AG04449 (cell line): ENCODE measurements at regions of chr3 and their contacts with region 1.

Region 1: DNA sequence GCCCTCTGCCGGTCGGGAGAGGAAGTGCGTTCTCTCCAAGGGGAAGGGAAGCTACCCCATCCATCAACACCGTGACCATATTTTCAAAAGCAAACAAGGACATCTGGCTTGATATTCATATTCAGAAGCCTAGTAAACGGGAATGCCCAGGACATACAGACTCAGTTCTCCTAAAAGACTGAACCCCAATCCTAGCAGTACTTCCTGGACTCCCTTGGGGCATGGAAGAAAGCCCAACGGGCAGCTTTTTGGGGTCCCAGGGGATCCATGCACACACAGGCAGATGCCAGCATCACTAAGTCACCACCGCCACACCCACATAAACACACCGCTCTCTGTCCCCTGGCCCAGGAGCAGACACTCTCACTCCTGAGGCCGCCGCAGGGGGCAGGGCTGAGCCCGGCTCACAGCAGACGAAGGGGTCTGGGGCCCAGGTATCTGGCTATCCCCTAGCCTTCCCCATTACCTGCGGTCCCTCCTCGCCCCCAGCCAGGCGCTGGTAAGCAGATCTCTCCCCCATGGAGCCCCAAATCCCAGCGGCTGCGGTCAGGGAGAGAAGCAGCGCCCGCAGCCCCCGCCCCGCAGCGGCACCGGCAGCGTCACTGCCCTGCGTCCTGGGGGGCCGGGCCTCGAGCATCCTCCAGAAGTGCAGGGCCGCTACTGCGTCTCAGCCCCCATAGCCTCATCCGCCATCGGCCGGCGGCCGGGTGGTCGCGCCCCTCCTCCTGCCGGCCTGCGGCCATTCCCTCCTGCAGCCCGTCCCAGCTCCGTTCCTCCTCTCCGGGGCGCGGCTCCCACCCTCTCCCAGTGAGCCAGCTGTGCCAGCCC is 13.4 kb downstream of the TNK2 start:
- DNase-seq: no peak
- H3K4me3 ChIP-seq: peak overlapping the region; percentile 78
- CTCF ChIP-seq: peak; percentile 97

Region 2: GRCh38 chr3:195558602-195559001 is 336.4 kb before region 1 on chr3:
- CTCF ChIA-PET with region 1: no interaction called
- POLR2A ChIA-PET with region 1: no interaction called
- DNase-seq: no peak
- H3K4me3 ChIP-seq: no peak overlapping the region
- CTCF ChIP-seq: no peak

Region 3: GRCh38 chr3:195870442-195870841 is 24.6 kb before region 1 on chr3:
- CTCF ChIA-PET with region 1: interaction called, 31 read pairs
- POLR2A ChIA-PET with region 1: no interaction called
- DNase-seq: no peak
- H3K4me3 ChIP-seq: no peak overlapping the region
- CTCF ChIP-seq: no peak